HEK293 (cell line): ENCODE measurements at regions of chr5 and their contacts with region 1.

Region 1: DNA sequence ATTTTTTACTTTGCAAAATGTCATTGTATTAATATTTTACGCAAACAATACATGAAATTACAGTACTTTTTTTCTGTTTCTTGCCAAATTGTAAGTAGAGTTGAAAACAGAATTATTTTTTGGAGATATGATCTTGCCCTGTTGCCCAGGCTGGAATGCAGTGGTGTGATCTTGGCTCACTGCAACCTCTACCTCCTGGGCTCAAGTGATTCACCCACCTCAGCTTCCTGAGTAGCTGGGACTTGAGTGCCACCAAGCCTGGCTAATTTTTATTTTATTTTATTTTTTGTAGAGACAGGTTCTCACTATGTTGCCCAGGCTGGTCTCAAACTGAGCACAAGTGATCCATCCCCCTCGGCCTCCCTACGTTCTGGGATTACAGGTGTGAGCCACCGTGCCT is 112.5 kb downstream of the COMMD10 start:
- H3K4me3 ChIP-seq: no peak overlapping the region
- H3K27ac ChIP-seq: no peak overlapping the region
- H3K4me1 ChIP-seq: no peaks in the 10 kb centered on the region
- CTCF ChIP-seq: no peak

Region 2: DNA sequence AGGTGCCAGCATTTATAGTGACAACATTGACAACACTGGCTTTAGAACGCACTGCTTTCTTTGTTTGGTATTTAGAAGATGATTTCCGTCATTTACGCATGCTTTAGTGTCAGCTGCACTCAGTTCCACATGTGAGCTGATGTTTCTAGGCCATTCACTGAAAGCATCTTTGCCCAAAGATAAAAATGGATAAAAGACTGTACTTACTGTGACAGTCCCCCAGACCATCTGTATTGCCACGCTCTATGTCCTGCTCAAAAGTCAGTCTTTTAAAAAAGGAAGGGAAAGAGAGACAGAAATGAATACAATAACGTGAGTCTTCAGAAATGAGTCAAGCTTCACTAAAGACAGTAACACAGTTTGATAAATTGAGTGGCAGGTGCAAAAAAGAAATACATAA is 278.1 kb after region 1 on chr5:
- CTCF ChIA-PET with region 1: interaction called, 10 read pairs
- POLR2A ChIA-PET with region 1: no interaction called
- H3K4me3 ChIP-seq: no peak overlapping the region
- H3K27ac ChIP-seq: no peak overlapping the region
- H3K4me1 ChIP-seq: no peaks in the 10 kb centered on the region
- CTCF ChIP-seq: no peak